Activated B cell treated with CpG ODN at 0.5 μM for 24 hours (primary cell): ENCODE measurements at regions of chr17 and their contacts with region 1.

Region 1: DNA sequence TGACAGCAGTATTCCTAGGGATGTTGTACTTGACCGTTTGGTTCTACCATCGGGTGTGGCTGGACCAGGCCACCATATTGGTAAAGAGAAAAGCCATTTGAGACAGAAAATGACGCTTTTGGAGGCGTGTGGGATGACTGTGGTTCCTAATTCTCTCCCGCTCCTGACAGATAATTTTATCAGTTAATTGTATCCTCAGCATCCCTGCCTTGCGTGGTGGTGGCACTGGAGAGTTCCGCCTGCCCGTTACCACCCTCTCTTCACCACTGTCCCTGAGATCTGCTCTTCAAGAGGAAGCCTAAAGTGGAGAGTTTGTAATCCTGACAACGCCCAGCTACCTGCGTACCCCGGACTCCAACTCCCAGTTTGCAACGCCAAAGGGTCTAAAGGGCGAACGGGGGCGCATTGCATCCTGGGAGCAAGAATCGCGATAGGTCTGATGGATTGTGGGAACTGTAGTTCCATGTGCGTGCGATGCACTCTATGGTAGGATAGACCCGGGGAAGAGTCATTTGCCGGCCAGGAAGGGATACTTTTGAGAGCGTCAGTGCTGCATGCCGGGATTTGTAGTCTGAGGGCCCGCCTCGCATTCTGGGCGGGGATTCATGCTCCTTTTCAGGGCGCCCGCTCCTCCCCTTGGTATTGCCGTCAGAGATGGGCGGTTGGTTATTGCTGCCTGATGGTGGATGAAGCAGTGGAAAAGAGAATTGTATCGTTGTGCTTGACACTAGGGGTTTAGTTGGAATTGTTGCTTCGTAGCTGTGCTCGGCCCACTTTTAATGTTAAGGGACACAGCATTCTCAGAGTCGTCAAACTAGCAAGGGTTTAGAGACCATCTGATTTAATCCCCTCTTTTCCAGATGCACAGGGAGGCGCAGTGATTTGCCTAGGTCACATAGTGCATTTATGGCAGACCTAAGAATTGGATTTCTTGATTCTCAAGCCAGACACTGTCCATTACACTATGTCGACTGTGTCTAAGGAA is 965 bp upstream of the PHF12 start:
- DNase-seq: peak; percentile 82
- ATAC-seq: peak; percentile 68
- H3K4me3 Mint-ChIP-seq: no peak overlapping the region
- H3K27ac Mint-ChIP-seq: no peak overlapping the region
- H3K4me1 Mint-ChIP-seq: peaks cover 17% of the 10 kb centered on the region
- H3K27me3 Mint-ChIP-seq: no peaks in the 10 kb centered on the region
- CTCF ChIP-seq: no peak

Region 2: DNA sequence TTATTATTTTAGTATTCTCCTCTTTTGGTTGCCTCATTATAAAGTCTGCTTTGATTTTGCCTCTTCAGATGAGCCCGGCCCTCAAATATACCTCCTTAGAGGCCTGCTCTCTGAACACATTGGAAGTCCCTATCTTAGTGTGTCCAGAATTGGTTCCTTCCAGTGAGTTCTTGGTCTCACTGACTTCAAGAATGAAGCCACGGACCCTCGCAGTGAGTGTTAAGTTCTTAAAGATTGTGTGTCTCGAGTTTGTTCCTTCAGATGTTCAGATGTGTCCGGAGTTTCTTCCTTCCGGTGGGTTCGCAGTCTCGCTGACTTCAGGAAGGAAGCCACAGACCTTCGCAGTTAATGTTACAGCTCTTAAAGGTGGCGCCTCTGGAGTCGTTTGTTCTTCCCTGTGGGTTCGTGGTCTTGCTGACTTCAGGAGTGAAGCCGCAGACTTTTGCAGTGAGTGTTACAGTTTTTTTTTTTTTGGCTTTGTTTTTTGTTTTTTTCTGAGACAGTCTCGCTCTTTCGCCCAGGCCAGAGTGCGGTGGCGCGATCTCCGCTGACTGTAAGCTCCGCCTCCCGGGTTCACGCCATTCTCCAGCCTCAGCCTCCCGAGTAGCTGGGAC is 1106.1 kb before region 1 on chr17:
- CTCF ChIA-PET with region 1: no interaction called
- POLR2A ChIA-PET with region 1: no interaction called
- intact Hi-C with region 1: no loop called
- DNase-seq: no peak
- ATAC-seq: no peak
- H3K4me3 Mint-ChIP-seq: peak overlapping the region; percentile 80
- H3K27ac Mint-ChIP-seq: no peak overlapping the region
- H3K4me1 Mint-ChIP-seq: peaks cover 15% of the 10 kb centered on the region
- H3K27me3 Mint-ChIP-seq: peaks cover 20% of the 10 kb centered on the region
- CTCF ChIP-seq: no peak

Region 3: GRCh38 chr17:28552246-28552999 is 399.9 kb before region 1 on chr17 and contains the start of gene UNC119:
- CTCF ChIA-PET with region 1: no interaction called
- POLR2A ChIA-PET with region 1: no interaction called
- intact Hi-C with region 1: loop called (anchors 5 kb)
- DNase-seq: peak; percentile 85
- ATAC-seq: peak; percentile 66
- H3K4me3 Mint-ChIP-seq: peak within 1 kb of the TSS; percentile 97
- H3K27ac Mint-ChIP-seq: peak within 1 kb of the TSS; percentile 93
- H3K4me1 Mint-ChIP-seq: peaks cover 65% of the 10 kb centered on the region
- H3K27me3 Mint-ChIP-seq: no peaks in the 10 kb centered on the region
- CTCF ChIP-seq: no peak
- total RNA-seq, gene UNC119: 426 and 437 TPM in 2 replicates

Region 4: GRCh38 chr17:28661635-28662537 is 290.4 kb before region 1 on chr17 and contains the starts of genes SDF2 and SUPT6H:
- CTCF ChIA-PET with region 1: no interaction called
- POLR2A ChIA-PET with region 1: interaction called, 9 read pairs
- intact Hi-C with region 1: loop called (anchors 5 kb)
- DNase-seq: peak; percentile 95
- ATAC-seq: peak; percentile 83
- H3K4me3 Mint-ChIP-seq: peak within 1 kb of the TSS; percentile 98
- H3K27ac Mint-ChIP-seq: peak within 1 kb of the TSS; percentile 100
- H3K4me1 Mint-ChIP-seq: peaks cover 56% of the 10 kb centered on the region
- H3K27me3 Mint-ChIP-seq: no peaks in the 10 kb centered on the region
- CTCF ChIP-seq: no peak
- total RNA-seq, gene SDF2: 36.1 and 47.7 TPM in 2 replicates
- total RNA-seq, gene SUPT6H: 77.1 and 92.4 TPM in 2 replicates

Region 5: DNA sequence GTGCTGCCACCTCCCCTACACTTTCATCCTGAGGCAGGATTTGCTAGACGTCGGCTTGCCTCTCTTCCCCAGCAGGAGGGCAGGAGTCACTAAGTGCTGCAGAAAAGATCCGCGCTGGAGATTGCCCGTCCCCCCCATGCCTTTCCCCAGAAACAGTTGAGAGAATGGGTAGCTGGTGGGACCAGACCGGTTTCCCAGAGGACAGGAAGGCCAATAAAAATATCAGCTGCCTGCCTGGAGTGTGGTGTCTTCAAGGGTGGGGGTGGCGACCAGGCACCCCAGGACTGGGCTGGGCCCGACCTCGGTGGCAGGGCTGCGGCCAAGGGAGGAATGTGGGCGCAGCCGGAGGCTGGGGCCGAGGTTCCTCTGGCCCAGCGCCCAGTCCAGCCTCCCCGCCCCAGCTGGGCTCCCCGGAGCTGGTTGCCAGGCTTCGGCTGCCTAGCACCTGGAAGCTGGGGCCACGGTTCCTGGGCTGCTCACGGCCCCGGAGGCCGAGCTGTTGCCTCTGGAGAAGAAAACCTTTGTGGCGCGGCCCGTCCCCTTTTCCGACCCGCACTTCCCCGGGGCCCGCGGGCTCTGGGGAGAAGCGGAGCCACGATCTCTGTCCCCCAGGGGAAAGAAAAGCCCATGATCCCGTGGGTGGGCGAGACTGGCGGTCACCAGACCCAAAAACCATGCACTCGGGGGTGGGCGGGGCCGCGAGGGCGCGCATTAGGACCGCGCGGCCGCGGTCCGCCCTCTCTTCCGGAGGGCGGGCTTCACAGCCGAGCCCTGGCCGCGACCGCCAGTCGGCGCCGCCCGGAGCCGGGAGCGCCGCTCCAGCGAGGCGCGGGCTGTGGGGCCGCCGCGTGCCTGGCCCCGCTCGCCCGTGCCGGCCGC is 208.8 kb before region 1 on chr17 and contains the start of gene TRAF4:
- CTCF ChIA-PET with region 1: no interaction called
- POLR2A ChIA-PET with region 1: interaction called, 33 read pairs
- intact Hi-C with region 1: no loop called
- DNase-seq: peak; percentile 87
- ATAC-seq: peak; percentile 66
- H3K4me3 Mint-ChIP-seq: peak within 1 kb of the TSS; percentile 93
- H3K27ac Mint-ChIP-seq: peak within 1 kb of the TSS; percentile 99
- H3K4me1 Mint-ChIP-seq: peaks cover 70% of the 10 kb centered on the region
- H3K27me3 Mint-ChIP-seq: no peaks in the 10 kb centered on the region
- CTCF ChIP-seq: no peak
- total RNA-seq, gene TRAF4: 754 and 903 TPM in 2 replicates

Region 6: GRCh38 chr17:28842282-28843012 is 109.8 kb before region 1 on chr17 and contains the start of gene FAM222B:
- CTCF ChIA-PET with region 1: no interaction called
- POLR2A ChIA-PET with region 1: interaction called, 9 read pairs
- intact Hi-C with region 1: loop called (anchors 2 kb)
- DNase-seq: peak; percentile 84
- ATAC-seq: peak; percentile 98
- H3K4me3 Mint-ChIP-seq: peak within 1 kb of the TSS; percentile 96
- H3K27ac Mint-ChIP-seq: peak within 1 kb of the TSS; percentile 91
- H3K4me1 Mint-ChIP-seq: peaks cover 24% of the 10 kb centered on the region
- H3K27me3 Mint-ChIP-seq: no peaks in the 10 kb centered on the region
- CTCF ChIP-seq: no peak
- total RNA-seq, gene FAM222B: 15.6 and 16.0 TPM in 2 replicates

Region 7: GRCh38 chr17:28925912-28926365 is 26.3 kb before region 1 on chr17:
- CTCF ChIA-PET with region 1: no interaction called
- POLR2A ChIA-PET with region 1: interaction called, 13 read pairs
- intact Hi-C with region 1: loop called (anchors 2 kb)
- DNase-seq: no peak
- ATAC-seq: peak; percentile 72
- H3K4me3 Mint-ChIP-seq: peak overlapping the region; percentile 13
- H3K27ac Mint-ChIP-seq: peak overlapping the region; percentile 65
- H3K4me1 Mint-ChIP-seq: peaks cover 50% of the 10 kb centered on the region
- H3K27me3 Mint-ChIP-seq: no peaks in the 10 kb centered on the region
- CTCF ChIP-seq: no peak

Region 8: GRCh38 chr17:29293890-29294579 is 341.8 kb after region 1 on chr17 and contains the start of gene NUFIP2:
- CTCF ChIA-PET with region 1: no interaction called
- POLR2A ChIA-PET with region 1: interaction called, 7 read pairs
- intact Hi-C with region 1: loop called (anchors 1 kb)
- DNase-seq: peak; percentile 95
- ATAC-seq: peak; percentile 83
- H3K4me3 Mint-ChIP-seq: peak within 1 kb of the TSS; percentile 100
- H3K27ac Mint-ChIP-seq: peak within 1 kb of the TSS; percentile 100
- H3K4me1 Mint-ChIP-seq: peaks cover 45% of the 10 kb centered on the region
- H3K27me3 Mint-ChIP-seq: no peaks in the 10 kb centered on the region
- CTCF ChIP-seq: no peak
- total RNA-seq, gene NUFIP2: 61.0 and 61.8 TPM in 2 replicates